Common myeloid progenitor, CD34-positive (primary cell): ENCODE measurements at regions of chr3 and their contacts with region 1.

Region 1: DNA sequence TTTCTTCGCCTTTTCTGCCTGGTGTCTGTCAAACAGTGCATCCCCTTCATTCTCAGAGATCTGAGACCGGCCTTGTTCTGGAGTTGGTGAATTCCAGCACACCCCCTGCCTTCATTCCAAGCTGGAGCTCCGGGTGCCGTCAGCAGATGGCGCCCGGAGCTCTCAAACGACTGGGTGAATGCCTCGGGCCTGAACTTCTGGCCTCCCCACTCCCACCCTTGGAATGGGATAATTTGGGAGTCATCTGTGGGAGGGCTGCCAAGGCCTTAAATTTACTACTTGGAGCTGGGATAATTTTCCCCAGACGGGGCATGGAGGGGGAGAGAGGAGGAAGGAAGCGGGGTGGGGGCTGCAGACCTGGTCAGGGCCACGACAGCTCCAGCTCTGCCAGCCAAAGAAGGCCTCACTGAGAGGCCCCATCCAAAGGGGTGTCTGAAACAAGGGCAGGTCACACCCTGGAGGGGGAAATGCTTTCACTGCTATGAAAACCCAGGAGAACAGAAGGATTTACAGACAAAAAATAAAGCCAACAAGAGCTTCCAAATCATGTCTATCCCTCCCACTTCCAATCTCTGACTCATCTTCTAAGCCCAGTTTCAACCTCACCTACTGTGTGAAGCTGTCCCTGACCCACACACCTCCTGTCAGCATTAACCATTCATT is 187.9 kb downstream of the OPA1 start:
- DNase-seq: peak; percentile 43 to 65 (median 56)
- H3K4me3 ChIP-seq: no peak overlapping the region
- H3K27ac ChIP-seq: no peak overlapping the region
- H3K4me1 ChIP-seq: peaks cover 0 to 5% (median 0%) of the 10 kb centered on the region in 4 experiments
- H3K27me3 ChIP-seq: peaks cover 0 to 65% (median 33%) of the 10 kb centered on the region in 5 experiments

Region 2: GRCh38 chr3:193732391-193732790 is 48.5 kb before region 1 on chr3:
- CTCF ChIA-PET with region 1: no interaction called
- POLR2A ChIA-PET with region 1: no interaction called
- DNase-seq: no peak
- H3K4me3 ChIP-seq: no peak overlapping the region
- H3K27ac ChIP-seq: no peak overlapping the region
- H3K4me1 ChIP-seq: peaks cover 0 to 13% (median 6%) of the 10 kb centered on the region in 4 experiments
- H3K27me3 ChIP-seq: no peaks in the 10 kb centered on the region

Region 3: DNA sequence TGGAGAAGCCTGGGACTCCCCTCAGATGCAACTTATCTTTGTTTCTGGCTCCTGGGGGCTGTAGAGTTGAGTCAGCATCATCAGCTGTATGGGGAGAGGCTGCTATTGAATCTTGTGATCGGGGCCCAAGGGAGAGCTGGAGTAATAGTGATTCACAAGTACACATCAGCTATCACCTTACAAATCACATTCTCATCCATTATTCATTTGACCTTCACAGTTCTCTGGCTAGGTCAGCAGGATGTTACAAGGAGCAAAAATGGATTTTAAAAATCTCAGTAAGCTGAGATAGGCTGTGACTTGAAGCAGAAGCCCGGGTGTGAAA is 12.9 kb before region 1 on chr3:
- CTCF ChIA-PET with region 1: interaction called, 22 read pairs
- POLR2A ChIA-PET with region 1: no interaction called
- DNase-seq: no peak
- H3K4me3 ChIP-seq: no peak overlapping the region
- H3K27ac ChIP-seq: no peak overlapping the region
- H3K4me1 ChIP-seq: peaks cover 0 to 7% (median 3%) of the 10 kb centered on the region in 4 experiments
- H3K27me3 ChIP-seq: peaks cover 0 to 6% (median 0%) of the 10 kb centered on the region in 5 experiments

Region 4: DNA sequence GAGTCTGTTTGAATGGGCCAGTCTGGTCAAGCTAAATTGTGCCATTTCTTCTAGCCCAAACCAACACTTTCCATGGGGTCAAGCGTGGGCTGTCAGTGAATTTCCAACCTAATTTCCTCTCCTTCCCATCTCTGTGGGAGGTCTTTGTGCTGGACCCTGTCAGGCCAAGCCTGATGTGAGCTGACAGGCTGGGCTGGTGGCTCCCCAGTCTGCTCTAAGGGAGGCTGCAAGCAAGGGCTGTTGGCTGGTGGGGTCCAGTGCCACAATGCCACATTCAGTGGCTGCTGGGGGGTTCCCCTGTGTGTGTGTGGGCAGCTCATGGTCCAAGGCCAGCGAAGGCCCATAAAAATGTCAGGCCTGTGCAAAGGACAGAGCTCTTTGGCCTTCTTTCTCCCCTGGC is 28.2 kb after region 1 on chr3:
- CTCF ChIA-PET with region 1: no interaction called
- POLR2A ChIA-PET with region 1: no interaction called
- DNase-seq: no peak
- H3K4me3 ChIP-seq: no peak overlapping the region
- H3K27ac ChIP-seq: no peak overlapping the region
- H3K4me1 ChIP-seq: no peaks in the 10 kb centered on the region
- H3K27me3 ChIP-seq: no peaks in the 10 kb centered on the region

Region 5: GRCh38 chr3:194134757-194135528 is 354.0 kb after region 1 on chr3:
- CTCF ChIA-PET with region 1: interaction called, 40 read pairs
- POLR2A ChIA-PET with region 1: interaction called, 4 read pairs
- DNase-seq: peak; percentile 91 to 97 (median 95)
- H3K4me3 ChIP-seq: peak overlapping the region in 6 of 7 experiments; percentile 28 to 71 (median 64)
- H3K27ac ChIP-seq: peak overlapping the region in 1 of 2 experiments; percentile 68
- H3K4me1 ChIP-seq: peaks cover 16 to 62% (median 59%) of the 10 kb centered on the region in 4 experiments
- H3K27me3 ChIP-seq: peaks cover 0 to 63% (median 22%) of the 10 kb centered on the region in 5 experiments

Region 6: GRCh38 chr3:194315088-194315964 is 534.4 kb after region 1 on chr3:
- CTCF ChIA-PET with region 1: interaction called, 55 read pairs
- POLR2A ChIA-PET with region 1: interaction called, 4 read pairs
- DNase-seq: peak; percentile 75 to 83 (median 83)
- H3K4me3 ChIP-seq: peak overlapping the region; percentile 23 to 73 (median 53)
- H3K27ac ChIP-seq: no peak overlapping the region
- H3K4me1 ChIP-seq: peaks cover 2 to 52% (median 35%) of the 10 kb centered on the region in 4 experiments
- H3K27me3 ChIP-seq: peaks cover 0 to 20% (median 2%) of the 10 kb centered on the region in 5 experiments